Breast epithelium (tissue), 4 donors: ENCODE measurements at regions of chr2 and their contacts with region 1.

Region 1: GRCh38 chr2:235330775-235331451 is 162.9 kb upstream of the AGAP1 start:
- DNase-seq: peak; percentile 43 to 66
- H3K4me3 ChIP-seq: peak overlapping the region in 1 of 3 donors; percentile 13
- H3K27ac ChIP-seq: peak overlapping the region; percentile 0 to 32
- H3K4me1 ChIP-seq: no peaks in the 10 kb centered on the region
- H3K27me3 ChIP-seq: no peaks in the 10 kb centered on the region
- CTCF ChIP-seq: no peak
- POLR2A ChIP-seq: no peak

Region 2: GRCh38 chr2:234763002-234763873 is 567.7 kb before region 1 on chr2:
- intact Hi-C with region 1: loop called (anchors 5 kb)
- DNase-seq: no peak
- H3K4me3 ChIP-seq: no peak overlapping the region
- H3K27ac ChIP-seq: no peak overlapping the region
- H3K4me1 ChIP-seq: no peaks in the 10 kb centered on the region
- H3K27me3 ChIP-seq: no peaks in the 10 kb centered on the region
- CTCF ChIP-seq: no peak
- POLR2A ChIP-seq: no peak

Region 3: DNA sequence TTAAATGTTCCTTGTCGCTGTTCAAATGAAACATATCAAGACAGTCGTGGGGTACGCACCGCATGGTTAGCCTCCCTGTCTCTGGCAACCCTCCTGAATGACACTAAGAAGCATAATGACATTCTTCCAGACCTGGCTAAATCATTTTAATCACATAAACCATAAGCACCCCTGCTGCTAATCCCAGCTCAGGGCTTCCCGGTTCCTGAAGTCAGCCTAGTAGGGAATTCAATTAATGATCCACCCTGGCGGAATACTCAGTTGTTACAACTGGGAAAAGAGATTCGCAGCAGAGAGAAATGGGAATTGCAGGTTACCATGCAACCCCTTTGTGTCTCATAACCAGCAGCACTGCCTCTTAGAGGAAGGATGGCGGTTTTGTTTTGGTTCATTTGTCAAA is 37.9 kb before region 1 on chr2:
- intact Hi-C with region 1: loop called (anchors 1 kb)
- DNase-seq: no peak
- H3K4me3 ChIP-seq: no peak overlapping the region
- H3K27ac ChIP-seq: no peak overlapping the region
- H3K4me1 ChIP-seq: no peaks in the 10 kb centered on the region
- H3K27me3 ChIP-seq: no peaks in the 10 kb centered on the region
- CTCF ChIP-seq: no peak
- POLR2A ChIP-seq: no peak